Aorta (tissue), 5 donors: ENCODE measurements at regions of chr5 and their contacts with region 1.

Region 1: DNA sequence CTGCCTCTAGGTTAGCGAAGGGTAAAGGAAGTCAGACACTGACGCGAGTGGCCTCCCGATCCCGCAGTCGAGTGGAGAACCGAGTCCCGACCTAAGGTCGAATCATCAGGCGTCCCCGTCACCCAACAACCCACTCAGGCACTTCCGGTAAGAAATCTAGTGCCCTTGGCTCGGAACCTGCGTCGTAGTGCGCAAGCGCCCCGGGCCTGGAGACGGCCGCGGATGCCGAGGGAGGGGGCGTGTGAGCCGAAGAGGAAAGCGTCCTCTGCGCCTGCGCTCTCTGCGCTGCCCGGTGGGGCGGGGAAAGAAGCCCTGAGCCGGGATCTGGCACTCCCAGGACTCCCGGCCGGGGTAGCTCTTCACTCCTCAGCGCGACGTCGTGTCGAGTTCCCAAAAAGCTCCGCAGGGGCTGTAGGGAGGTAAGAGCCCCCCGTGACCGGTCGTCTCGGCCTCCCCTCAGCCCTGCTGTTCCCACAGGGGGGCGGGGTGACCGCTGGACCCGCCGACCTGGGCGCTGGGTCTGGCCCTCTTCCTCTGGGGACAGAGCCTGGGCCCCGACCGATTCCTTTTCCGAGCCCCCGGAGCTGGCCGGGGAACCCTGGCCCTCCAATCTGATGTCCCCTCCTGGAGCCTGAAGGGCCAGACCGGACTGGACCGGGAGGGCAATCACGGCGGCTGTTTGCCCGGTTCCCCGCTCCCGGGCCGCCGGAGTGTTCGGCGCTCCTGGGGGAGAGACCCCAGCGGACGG is at the start of gene ZFYVE16:
- DNase-seq: peak; percentile 99 to 100
- ATAC-seq: peak; percentile 99
- H3K4me3 ChIP-seq: peak within 1 kb of the TSS; percentile 73 to 76
- H3K27ac ChIP-seq: peak within 1 kb of the TSS; percentile 77 to 95
- H3K4me1 ChIP-seq: no peaks in the 10 kb centered on the region
- H3K27me3 ChIP-seq: no peaks in the 10 kb centered on the region
- total RNA-seq, gene ZFYVE16: 43.3 to 57.6 TPM

Region 2: GRCh38 chr5:80231243-80231642 is 176.7 kb before region 1 on chr5:
- intact Hi-C with region 1: no loop called
- DNase-seq: no peak
- ATAC-seq: no peak
- H3K4me3 ChIP-seq: no peak overlapping the region
- H3K27ac ChIP-seq: no peak overlapping the region
- H3K4me1 ChIP-seq: no peaks in the 10 kb centered on the region
- H3K27me3 ChIP-seq: no peaks in the 10 kb centered on the region

Region 3: GRCh38 chr5:80255732-80256479 is 152.0 kb before region 1 on chr5 and contains the start of gene SERINC5:
- intact Hi-C with region 1: loop called in 1 of 2 experiments (anchors 5 kb)
- DNase-seq: peak; percentile 93 to 94
- ATAC-seq: peak; percentile 96
- H3K4me3 ChIP-seq: peak within 1 kb of the TSS; percentile 81 to 85
- H3K27ac ChIP-seq: peak within 1 kb of the TSS; percentile 30 to 100
- H3K4me1 ChIP-seq: no peaks in the 10 kb centered on the region
- H3K27me3 ChIP-seq: no peaks in the 10 kb centered on the region
- total RNA-seq, gene SERINC5: 15.5 to 22.1 TPM

Region 4: DNA sequence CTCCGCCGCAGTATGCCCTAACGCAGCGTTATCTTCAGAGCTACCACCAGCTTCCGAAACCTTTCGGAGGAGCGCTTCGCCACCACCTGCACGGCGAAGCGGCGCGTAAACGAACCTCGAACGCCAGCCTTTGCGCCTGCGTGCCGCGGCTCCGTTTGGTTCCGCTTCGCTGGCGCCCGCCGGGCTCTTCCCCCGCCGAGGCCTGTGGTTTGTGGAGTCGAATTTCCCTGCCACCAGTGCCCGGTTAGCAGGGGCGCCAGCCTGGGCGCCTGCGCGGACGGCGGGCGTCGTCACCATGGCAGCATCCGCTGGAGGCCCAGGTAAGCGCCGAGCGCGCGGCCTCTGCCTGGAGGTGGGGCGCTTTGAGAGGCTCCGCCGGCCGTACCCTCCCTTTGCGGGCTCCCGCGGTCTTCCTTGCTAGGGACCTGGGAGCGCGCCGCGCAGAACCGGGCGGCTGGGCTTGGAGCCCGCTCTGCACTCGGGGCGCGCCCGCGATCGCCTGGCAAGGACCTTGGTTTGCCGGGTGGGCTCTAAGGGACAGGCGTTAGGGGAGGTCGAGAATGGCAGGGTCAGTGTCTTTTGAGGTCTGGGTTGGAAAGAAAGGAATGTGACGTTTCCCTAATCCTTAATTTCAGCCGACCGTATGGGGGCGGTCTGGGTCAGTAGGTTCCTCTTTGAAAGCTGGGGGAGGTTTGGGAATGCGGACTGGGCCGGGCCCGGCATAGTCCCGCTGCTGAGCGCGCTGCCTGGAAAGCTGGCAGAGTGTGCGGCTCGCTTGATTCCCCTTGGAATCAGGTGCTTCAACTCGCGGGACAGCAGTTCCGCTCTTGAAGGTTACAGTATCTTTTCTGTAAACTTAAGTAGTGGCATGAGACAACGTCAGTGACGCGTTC is 80.2 kb after region 1 on chr5 and contains the start of gene FAM151B:
- intact Hi-C with region 1: loop called in 1 of 2 experiments (anchors 1 kb)
- DNase-seq: peak; percentile 92 to 94
- ATAC-seq: peak; percentile 95
- H3K4me3 ChIP-seq: peak within 1 kb of the TSS; percentile 52 to 62
- H3K27ac ChIP-seq: peak within 1 kb of the TSS in 1 of 2 donors; percentile 4
- H3K4me1 ChIP-seq: no peaks in the 10 kb centered on the region
- H3K27me3 ChIP-seq: no peaks in the 10 kb centered on the region
- total RNA-seq, gene FAM151B: 1.9 to 4.4 TPM

Region 5: GRCh38 chr5:80654391-80655230 is 246.7 kb after region 1 on chr5 and contains the starts of genes DHFR and MSH3:
- intact Hi-C with region 1: loop called in 1 of 2 experiments (anchors 5 kb)
- DNase-seq: peak; percentile 91 to 95
- ATAC-seq: peak; percentile 85
- H3K4me3 ChIP-seq: peak within 1 kb of the TSS; percentile 90 to 99
- H3K27ac ChIP-seq: peak within 1 kb of the TSS; percentile 72 to 98
- H3K4me1 ChIP-seq: no peaks in the 10 kb centered on the region
- H3K27me3 ChIP-seq: no peaks in the 10 kb centered on the region
- total RNA-seq, gene DHFR: 4.5 to 10.9 TPM
- total RNA-seq, gene MSH3: 12.8 to 18.1 TPM